Activated naive CD4-positive, alpha-beta T cell treated with anti-CD3 and anti-CD28 coated beads, Interleukin-2, amount 10 ng/mL, durations not matched to agents 7 days and 5 days (primary cell): ENCODE measurements at regions of chr15 and their contacts with region 1.

Region 1: DNA sequence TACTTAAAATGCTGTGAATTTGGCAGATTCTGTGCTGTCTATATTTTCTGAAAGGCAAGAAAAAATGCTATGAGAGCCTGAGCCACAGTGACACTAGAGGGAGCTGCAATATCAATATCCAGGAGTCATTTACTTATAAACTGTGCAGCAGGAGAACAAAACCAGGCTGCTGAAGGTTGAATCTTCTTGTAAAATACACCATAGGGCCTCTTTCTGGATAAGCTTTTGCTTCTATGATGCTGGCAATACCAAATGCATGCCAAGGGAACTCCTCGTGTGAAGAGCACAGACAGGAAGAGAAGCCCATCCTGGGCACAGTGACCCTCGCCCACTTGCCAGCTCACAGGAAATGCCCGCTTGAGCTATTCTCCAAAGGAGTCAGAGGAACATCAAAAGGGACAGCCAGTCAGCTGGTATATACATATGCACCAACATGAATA is 48.0 kb upstream of the TSPAN3 start:
- DNase-seq: peak; percentile 59
- H3K4me3 Mint-ChIP-seq: no peak overlapping the region
- H3K27ac Mint-ChIP-seq: no peak overlapping the region
- H3K4me1 Mint-ChIP-seq: peaks cover 6% of the 10 kb centered on the region
- H3K27me3 Mint-ChIP-seq: no peaks in the 10 kb centered on the region

Region 2: GRCh38 chr15:76829939-76830338 is 289.0 kb before region 1 on chr15:
- CTCF ChIA-PET with region 1: no interaction called
- DNase-seq: no peak
- H3K4me3 Mint-ChIP-seq: no peak overlapping the region
- H3K27ac Mint-ChIP-seq: no peak overlapping the region
- H3K4me1 Mint-ChIP-seq: no peaks in the 10 kb centered on the region
- H3K27me3 Mint-ChIP-seq: no peaks in the 10 kb centered on the region

Region 3: DNA sequence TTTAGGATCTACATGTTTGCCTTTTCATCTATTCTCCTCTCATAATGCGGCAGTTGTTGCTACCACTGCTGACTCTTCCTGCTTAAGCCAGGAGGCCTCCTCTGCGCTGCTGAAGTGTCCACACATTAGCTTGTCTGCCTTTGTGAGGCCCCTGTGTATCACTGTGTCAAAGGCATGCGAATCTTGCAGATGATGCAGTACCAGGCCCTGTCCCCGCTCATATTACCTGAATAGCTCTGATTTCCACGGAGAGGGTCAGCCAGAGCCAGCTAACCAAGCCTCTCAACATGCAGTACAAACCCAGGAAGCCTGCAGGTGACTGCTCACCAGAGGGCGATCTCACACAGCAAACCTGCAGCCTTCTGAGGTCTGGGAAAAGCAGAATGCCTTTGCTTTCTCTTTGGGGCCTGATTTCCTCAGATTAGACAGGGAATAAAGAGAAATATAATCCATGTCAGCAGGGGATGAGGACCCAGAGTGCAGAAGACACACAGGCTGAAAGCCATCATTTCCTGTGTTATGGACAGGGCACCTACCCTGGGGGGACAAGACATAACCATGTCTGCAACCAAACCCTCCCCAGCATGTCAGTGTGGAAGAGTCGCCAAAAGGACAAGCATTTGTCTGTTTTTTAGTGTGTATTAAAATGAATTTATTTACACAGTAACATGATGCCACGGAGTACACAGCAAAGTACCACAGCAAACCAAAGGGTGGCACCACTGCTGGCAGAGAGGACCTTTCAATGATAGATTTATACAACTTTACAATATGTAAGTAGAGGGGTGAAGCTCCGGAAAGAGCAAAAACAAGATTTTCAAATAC is 11.2 kb before region 1 on chr15:
- CTCF ChIA-PET with region 1: interaction called, 23 read pairs
- DNase-seq: peak; percentile 65
- H3K4me3 Mint-ChIP-seq: no peak overlapping the region
- H3K27ac Mint-ChIP-seq: no peak overlapping the region
- H3K4me1 Mint-ChIP-seq: no peaks in the 10 kb centered on the region
- H3K27me3 Mint-ChIP-seq: peaks cover 5% of the 10 kb centered on the region

Region 4: GRCh38 chr15:77179541-77179998 is 60.7 kb after region 1 on chr15:
- CTCF ChIA-PET with region 1: interaction called, 16 read pairs
- DNase-seq: peak; percentile 38
- H3K4me3 Mint-ChIP-seq: no peak overlapping the region
- H3K27ac Mint-ChIP-seq: peak overlapping the region; percentile 89
- H3K4me1 Mint-ChIP-seq: peaks cover 53% of the 10 kb centered on the region
- H3K27me3 Mint-ChIP-seq: no peaks in the 10 kb centered on the region

Region 5: GRCh38 chr15:77186594-77187011 is 67.7 kb after region 1 on chr15:
- CTCF ChIA-PET with region 1: interaction called, 25 read pairs
- DNase-seq: peak; percentile 29
- H3K4me3 Mint-ChIP-seq: no peak overlapping the region
- H3K27ac Mint-ChIP-seq: no peak overlapping the region
- H3K4me1 Mint-ChIP-seq: peaks cover 46% of the 10 kb centered on the region
- H3K27me3 Mint-ChIP-seq: no peaks in the 10 kb centered on the region